Gastrocnemius medialis (tissue), 4 donors: ENCODE measurements at regions of chr19 and their contacts with region 1.

Region 1: GRCh38 chr19:55632463-55632834 is 8.1 kb upstream of the ZNF784 start:
- DNase-seq: peak; percentile 82 to 91
- ATAC-seq: peak; percentile 59 to 70
- H3K4me3 ChIP-seq: no peak overlapping the region
- H3K27ac ChIP-seq: peak overlapping the region; percentile 90 to 100 (median 98)
- H3K4me1 ChIP-seq: peaks cover 24 to 27% of the 10 kb centered on the region in 2 donors
- H3K27me3 ChIP-seq: no peaks in the 10 kb centered on the region
- CTCF ChIP-seq: peak; percentile 86 to 95 (median 91)
- POLR2A ChIP-seq: no peak

Region 2: GRCh38 chr19:55467236-55468053 is 165.0 kb before region 1 on chr19:
- in situ Hi-C with region 1: no loop called
- intact Hi-C with region 1: loop called (anchors 5 kb)
- DNase-seq: no peak
- ATAC-seq: peak; percentile 50 to 79
- H3K4me3 ChIP-seq: no peak overlapping the region
- H3K27ac ChIP-seq: no peak overlapping the region
- H3K4me1 ChIP-seq: peaks cover under 1 to 1% of the 10 kb centered on the region in 2 donors
- H3K27me3 ChIP-seq: no peaks in the 10 kb centered on the region
- CTCF ChIP-seq: peak; percentile 79 to 98 (median 95)
- POLR2A ChIP-seq: no peak

Region 3: DNA sequence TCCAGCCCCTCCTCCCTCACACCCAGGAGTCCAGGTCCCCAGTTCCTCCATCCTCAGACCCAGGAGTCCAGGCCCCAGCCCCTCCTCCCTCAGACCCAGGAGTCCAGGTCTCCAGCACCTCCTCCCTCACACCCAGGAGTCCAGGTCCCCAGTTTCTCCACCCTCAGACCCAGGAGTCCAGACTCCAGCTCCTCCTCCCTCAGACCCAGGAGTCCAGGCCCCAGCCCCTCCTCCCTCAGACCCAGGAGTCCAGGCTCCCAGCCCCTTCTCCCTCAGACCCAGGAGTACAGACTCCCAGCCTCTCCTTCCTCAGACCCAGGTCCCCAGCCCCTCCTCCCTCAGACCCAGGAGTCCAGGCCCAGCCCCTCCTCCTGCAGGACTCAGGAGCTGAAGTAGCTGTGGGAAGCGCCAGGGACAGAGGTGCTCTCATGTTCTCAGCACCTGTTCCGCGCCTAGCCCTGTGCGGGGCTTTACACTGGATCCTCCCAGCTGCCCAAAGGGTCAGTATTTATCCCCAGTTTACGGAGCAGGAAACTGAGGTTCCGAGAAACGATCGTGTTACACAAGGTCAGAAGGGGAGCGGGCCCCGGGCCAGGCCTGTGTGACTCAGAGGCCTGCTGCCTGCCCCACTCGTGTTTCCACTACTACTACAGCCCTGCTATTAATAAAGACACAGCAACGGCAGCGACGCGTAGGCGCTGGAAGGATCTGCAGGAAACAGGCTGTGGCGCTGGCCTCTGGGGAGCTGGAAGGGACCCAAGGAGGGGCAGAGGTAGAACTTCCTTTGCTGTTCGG is 85.4 kb before region 1 on chr19:
- in situ Hi-C with region 1: no loop called
- intact Hi-C with region 1: no loop called
- DNase-seq: peak; percentile 80 to 94
- ATAC-seq: peak; percentile 68 to 69
- H3K4me3 ChIP-seq: peak overlapping the region in 3 of 4 donors; percentile 3 to 17 (median 11)
- H3K27ac ChIP-seq: peak overlapping the region; percentile 90 to 98 (median 94)
- H3K4me1 ChIP-seq: peaks cover 51 to 57% of the 10 kb centered on the region in 2 donors
- H3K27me3 ChIP-seq: no peaks in the 10 kb centered on the region
- CTCF ChIP-seq: no peak
- POLR2A ChIP-seq: peak; percentile 74 to 78

Region 4: DNA sequence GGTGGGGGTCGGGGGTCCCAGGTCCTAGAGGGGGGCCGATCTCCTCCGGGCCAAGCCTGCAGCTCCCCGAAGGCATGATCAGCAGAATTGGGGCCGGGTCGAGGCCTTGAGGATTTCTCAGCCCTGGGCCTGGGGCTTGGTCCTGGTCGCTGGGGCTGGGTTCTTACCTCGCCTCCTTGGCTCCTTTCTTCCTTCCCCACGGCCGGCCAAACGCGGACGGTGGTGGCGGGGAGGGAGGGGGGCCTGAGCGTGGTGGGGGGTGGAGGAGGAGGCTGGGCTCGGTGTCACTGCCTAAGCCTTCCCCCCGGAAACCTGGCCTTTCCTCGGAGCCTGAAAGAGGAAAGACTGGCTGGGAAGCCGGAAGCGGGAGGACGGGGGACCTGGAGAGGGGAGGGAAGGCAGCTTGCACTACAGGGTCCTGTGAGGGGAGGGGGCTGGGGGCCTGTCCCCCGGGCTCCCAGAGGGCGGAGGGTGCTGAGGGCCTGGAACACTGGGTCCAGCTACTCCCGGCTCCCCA is 51.8 kb before region 1 on chr19 and contains the start of gene ZNF579:
- in situ Hi-C with region 1: loop called in 1 of 4 experiments (anchors 10 kb)
- intact Hi-C with region 1: loop called (anchors 2 kb)
- DNase-seq: peak; percentile 75 to 85
- ATAC-seq: peak; percentile 81 to 86
- H3K4me3 ChIP-seq: peak within 1 kb of the TSS; percentile 92 to 98 (median 96)
- H3K27ac ChIP-seq: peak within 1 kb of the TSS; percentile 96 to 100 (median 98)
- H3K4me1 ChIP-seq: peaks cover 3 to 19% of the 10 kb centered on the region in 2 donors
- H3K27me3 ChIP-seq: peaks cover 0 to 3% (median 0%) of the 10 kb centered on the region in 3 donors
- CTCF ChIP-seq: no peak
- POLR2A ChIP-seq: no peak
- total RNA-seq, gene ZNF579: 15.0 to 19.3 (median 16.8) TPM

Region 5: GRCh38 chr19:55586976-55587668 is 45.3 kb before region 1 on chr19:
- in situ Hi-C with region 1: loop called in 1 of 4 experiments (anchors 10 kb)
- intact Hi-C with region 1: no loop called
- DNase-seq: peak; percentile 77 to 84
- ATAC-seq: peak; percentile 87 to 91
- H3K4me3 ChIP-seq: peak overlapping the region; percentile 35 to 55 (median 50)
- H3K27ac ChIP-seq: no peak overlapping the region
- H3K4me1 ChIP-seq: peaks cover 18 to 20% of the 10 kb centered on the region in 2 donors
- H3K27me3 ChIP-seq: peaks cover 3 to 11% (median 6%) of the 10 kb centered on the region in 3 donors
- CTCF ChIP-seq: no peak
- POLR2A ChIP-seq: no peak

Region 6: DNA sequence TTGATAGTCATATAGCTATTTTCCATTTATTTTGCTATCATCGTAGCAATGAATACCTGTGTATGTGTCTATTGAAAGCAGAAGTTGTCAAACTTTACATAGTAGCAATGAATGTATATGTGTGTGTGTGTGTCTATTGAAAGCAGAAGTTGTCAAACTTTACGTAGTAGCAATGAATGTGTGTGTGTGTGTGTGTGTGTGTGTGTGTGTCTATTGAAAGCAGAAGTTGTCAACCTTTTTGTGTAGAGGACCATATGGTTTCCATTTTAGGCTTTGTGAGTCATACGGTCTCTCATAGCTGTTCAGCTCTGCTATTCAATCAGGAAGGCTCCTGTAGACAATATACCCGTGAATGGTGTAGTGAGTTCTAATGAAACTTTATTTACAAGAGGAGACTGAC is 224.7 kb after region 1 on chr19:
- in situ Hi-C with region 1: no loop called
- intact Hi-C with region 1: no loop called
- DNase-seq: no peak
- ATAC-seq: no peak
- H3K4me3 ChIP-seq: no peak overlapping the region
- H3K27ac ChIP-seq: no peak overlapping the region
- H3K4me1 ChIP-seq: no peaks in the 10 kb centered on the region
- H3K27me3 ChIP-seq: no peaks in the 10 kb centered on the region
- CTCF ChIP-seq: no peak
- POLR2A ChIP-seq: no peak